Dorsolateral prefrontal cortex (tissue), 120 donors: ENCODE measurements at regions of chr9 and their contacts with region 1.

Region 1: GRCh38 chr9:76810377-76810957 is 46.2 kb downstream of the PCA3 start:
- DNase-seq: peak in 4 of 10 donors; percentile 34 to 63 (median 47)
- H3K4me3 ChIP-seq: no peak overlapping the region
- H3K27ac ChIP-seq: peak overlapping the region in 41 of 59 donors; percentile 4 to 76 (median 47)
- H3K27me3 ChIP-seq: peaks cover 0 to 6% (median 0%) of the 10 kb centered on the region in 45 donors
- CTCF ChIP-seq: peak; percentile 52 to 96 (median 84)

Region 2: GRCh38 chr9:76576344-76576743 is 234.1 kb before region 1 on chr9:
- intact Hi-C with region 1: no loop called
- DNase-seq: no peak
- H3K4me3 ChIP-seq: no peak overlapping the region
- H3K27ac ChIP-seq: no peak overlapping the region
- H3K27me3 ChIP-seq: peaks cover 0 to 20% (median 3%) of the 10 kb centered on the region in 45 donors
- CTCF ChIP-seq: no peak

Region 3: DNA sequence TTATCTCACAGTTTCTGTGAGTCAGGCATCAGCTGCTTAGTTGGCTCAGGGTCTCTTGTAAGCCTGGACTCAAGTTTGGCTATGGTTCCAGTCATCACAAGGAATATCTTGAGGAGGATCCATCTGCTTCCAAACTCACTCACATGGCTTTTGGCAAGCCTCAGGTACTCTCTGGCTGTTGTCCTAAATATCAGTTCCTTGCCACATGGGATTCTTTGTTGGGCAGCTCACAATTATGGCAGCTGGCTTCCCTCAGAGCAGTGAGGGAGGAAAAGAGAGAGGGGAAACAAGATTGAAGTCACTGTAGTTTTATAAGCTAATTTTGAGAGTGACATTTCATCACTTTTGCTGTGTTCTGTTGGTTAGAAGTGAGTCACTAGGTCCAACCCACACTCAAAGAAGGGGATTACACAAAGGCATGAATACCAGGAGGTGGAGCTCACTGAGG is 207.0 kb before region 1 on chr9:
- intact Hi-C with region 1: no loop called
- DNase-seq: peak in 2 of 10 donors; percentile 11 to 49
- H3K4me3 ChIP-seq: no peak overlapping the region
- H3K27ac ChIP-seq: no peak overlapping the region
- H3K27me3 ChIP-seq: peaks cover 0 to 4% (median 0%) of the 10 kb centered on the region in 45 donors
- CTCF ChIP-seq: no peak

Region 4: DNA sequence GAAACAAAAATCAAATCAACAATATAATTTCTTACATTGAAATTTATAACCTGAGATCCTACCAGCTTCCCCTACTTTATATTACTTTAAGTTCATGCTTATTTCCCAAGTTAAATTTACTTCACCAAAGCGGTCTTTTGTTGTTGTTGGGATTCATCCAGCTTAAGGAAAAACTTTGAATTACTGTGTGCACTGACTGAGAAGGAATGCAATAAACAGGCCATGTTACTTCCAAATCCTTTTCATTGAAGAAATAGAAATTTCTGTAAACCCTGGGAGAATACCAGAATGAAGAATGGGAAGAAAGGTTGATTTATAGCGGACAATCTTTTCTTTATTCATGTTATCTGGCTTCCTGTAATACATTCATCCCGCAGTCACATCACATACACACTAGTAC is 37.4 kb before region 1 on chr9:
- intact Hi-C with region 1: loop called in 1 of 2 experiments (anchors 1 kb)
- DNase-seq: no peak
- H3K4me3 ChIP-seq: no peak overlapping the region
- H3K27ac ChIP-seq: peak overlapping the region in 6 of 59 donors; percentile 6 to 45 (median 34)
- H3K27me3 ChIP-seq: no peaks in the 10 kb centered on the region
- CTCF ChIP-seq: no peak

Region 5: DNA sequence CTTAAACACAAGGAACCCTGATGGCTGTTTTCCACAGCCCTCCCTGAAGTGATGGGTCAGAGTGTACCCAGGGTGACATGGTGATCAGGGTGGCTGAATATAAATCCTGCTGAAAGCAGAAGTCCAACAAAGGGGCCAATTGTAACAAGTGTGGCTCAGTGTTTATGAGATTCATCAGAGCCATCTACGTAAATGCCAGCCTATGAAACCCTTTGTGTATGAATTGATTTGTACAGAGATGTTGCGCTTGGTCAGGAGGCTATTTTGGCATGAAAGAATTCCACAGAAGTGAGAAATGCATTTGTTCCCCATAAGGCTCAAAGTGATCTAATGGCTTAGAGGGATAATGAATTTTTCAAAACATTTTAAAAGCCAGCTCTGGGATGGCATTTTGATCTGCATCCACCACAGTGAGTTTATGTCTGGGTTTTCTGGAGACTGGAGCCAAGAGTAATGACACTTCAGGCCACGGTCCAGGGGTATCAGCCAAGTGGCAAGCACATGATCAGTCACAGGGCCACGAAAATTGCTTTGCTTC is 83.0 kb after region 1 on chr9:
- intact Hi-C with region 1: loop called in 1 of 2 experiments (anchors 5 kb)
- DNase-seq: peak; percentile 18 to 89 (median 60)
- H3K4me3 ChIP-seq: peak overlapping the region in 19 of 59 donors; percentile 7 to 53 (median 26)
- H3K27ac ChIP-seq: peak overlapping the region in 58 of 59 donors; percentile 82 to 99 (median 96)
- H3K27me3 ChIP-seq: no peaks in the 10 kb centered on the region
- CTCF ChIP-seq: peak in 4 of 56 donors; percentile 6 to 14 (median 8)

Region 6: DNA sequence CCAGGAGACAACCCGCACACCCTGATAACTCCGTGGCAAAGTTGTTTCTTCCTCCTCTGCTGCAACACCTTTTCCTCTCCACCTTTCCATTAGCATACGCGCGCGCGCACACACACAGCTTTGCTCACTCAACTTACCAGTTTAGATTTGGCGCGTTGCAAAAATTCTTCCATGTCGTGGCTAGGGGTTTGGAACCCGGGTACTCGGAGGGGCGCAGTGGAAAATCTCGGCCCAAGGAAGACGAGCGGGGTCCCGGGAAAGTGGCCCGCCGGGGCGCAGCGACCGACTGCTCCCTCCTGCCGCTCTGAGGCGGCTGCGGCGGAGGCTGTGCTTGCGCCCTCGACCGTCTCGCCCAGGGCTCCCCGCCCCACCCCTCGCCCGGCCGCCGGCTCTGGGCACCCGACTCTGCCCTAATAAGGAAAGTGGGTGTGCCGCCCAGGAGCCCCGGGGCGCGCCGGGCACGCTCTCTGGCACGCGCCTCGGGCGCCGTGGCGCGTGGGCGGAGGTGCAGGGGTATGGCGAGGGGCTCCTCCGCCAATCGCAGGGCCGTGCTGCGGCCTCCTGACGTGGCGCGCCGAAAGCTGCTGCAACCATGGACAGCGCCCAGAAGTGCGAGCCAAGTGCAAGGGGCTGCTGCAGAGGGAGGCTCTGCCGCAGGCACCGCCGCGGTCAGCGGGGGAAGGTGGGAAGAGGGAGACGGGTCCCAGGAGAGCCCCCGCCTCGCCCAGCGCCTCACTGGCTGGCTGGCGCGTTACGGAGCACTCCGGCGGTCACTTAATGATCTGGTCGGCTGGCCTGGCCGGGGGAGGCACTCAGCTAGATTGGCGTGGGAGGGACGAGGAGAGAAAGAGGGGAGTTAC is 95.6 kb after region 1 on chr9 and contains the start of gene PRUNE2:
- intact Hi-C with region 1: loop called in 1 of 2 experiments (anchors 5 kb)
- DNase-seq: peak; percentile 27 to 84 (median 62)
- H3K4me3 ChIP-seq: peak within 1 kb of the TSS; percentile 41 to 89 (median 69)
- H3K27ac ChIP-seq: peak within 1 kb of the TSS; percentile 20 to 98 (median 86)
- H3K27me3 ChIP-seq: peaks cover 0 to 5% (median 0%) of the 10 kb centered on the region in 45 donors
- CTCF ChIP-seq: peak in 19 of 56 donors; percentile 6 to 33 (median 19)
- total RNA-seq, gene PRUNE2: 85.1 to 471 (median 248) TPM